Left lung (tissue), 14 donors: ENCODE measurements at regions of chr6 and their contacts with region 1.

Region 1: DNA sequence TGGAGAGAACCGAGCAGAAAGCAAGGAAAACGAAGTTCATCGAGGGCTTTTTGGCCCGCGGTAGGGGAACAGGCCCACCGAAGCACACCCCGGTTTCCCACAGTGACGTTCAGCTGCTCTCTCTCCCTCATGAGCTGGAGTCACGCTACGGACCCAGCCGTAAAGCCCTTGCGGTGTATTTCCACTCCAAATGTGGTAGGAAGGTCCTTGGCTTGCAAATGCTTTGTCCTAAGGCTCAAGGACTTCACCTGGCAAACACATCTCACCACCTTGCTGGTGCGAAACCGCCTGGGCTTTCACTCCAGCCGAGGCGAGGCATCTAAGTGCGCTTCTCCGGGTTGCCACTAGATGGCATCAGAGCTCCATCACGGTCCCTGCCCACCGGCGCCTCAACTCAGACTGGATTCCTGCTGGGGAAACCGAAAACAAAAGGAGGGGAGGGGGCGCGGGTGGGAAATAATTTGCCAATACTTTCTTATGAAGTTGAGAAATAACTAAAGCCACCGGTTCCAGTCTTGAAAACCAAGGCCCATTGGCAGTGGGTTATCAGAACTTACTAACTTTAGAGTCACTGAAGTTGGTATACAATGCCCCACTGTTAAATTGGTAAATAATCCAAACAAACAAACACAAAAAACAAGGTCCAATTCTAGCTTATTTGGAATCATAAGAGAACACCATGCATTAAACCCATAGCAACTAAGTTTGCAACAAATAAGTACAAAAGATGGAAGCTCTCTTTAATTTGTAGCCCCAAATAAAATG is 13.4 kb upstream of the FOXC1 start:
- DNase-seq: peak in 3 of 4 donors; percentile 71 to 89 (median 77)
- ATAC-seq: peak; percentile 98
- H3K4me3 ChIP-seq: no peak overlapping the region
- H3K27ac ChIP-seq: no peak overlapping the region
- H3K4me1 ChIP-seq: peaks cover 0 to 5% of the 10 kb centered on the region in 2 donors
- H3K27me3 ChIP-seq: peaks cover 23 to 91% of the 10 kb centered on the region in 2 donors
- CTCF ChIP-seq: peak; percentile 83 to 95

Region 2: GRCh38 chr6:1515280-1515679 is 81.0 kb before region 1 on chr6:
- intact Hi-C with region 1: no loop called
- DNase-seq: no peak
- ATAC-seq: no peak
- H3K4me3 ChIP-seq: no peak overlapping the region
- H3K27ac ChIP-seq: no peak overlapping the region
- H3K4me1 ChIP-seq: no peaks in the 10 kb centered on the region
- H3K27me3 ChIP-seq: no peaks in the 10 kb centered on the region
- CTCF ChIP-seq: no peak

Region 3: GRCh38 chr6:2353412-2354137 is 757.3 kb after region 1 on chr6:
- intact Hi-C with region 1: loop called (anchors 10 kb)
- DNase-seq: peak in 2 of 4 donors; percentile 71 to 81
- ATAC-seq: peak; percentile 91
- H3K4me3 ChIP-seq: no peak overlapping the region
- H3K27ac ChIP-seq: no peak overlapping the region
- H3K4me1 ChIP-seq: peaks cover 0 to 6% of the 10 kb centered on the region in 2 donors
- H3K27me3 ChIP-seq: no peaks in the 10 kb centered on the region
- CTCF ChIP-seq: peak; percentile 54 to 70

Region 4: GRCh38 chr6:2634139-2634964 is 1038.1 kb after region 1 on chr6:
- intact Hi-C with region 1: loop called in 1 of 2 experiments (anchors 10 kb)
- DNase-seq: peak; percentile 80 to 98 (median 86)
- ATAC-seq: peak; percentile 98
- H3K4me3 ChIP-seq: peak overlapping the region; percentile 42 to 54
- H3K27ac ChIP-seq: no peak overlapping the region
- H3K4me1 ChIP-seq: peaks cover 0 to 13% of the 10 kb centered on the region in 2 donors
- H3K27me3 ChIP-seq: no peaks in the 10 kb centered on the region
- CTCF ChIP-seq: peak; percentile 97 to 99

Region 5: DNA sequence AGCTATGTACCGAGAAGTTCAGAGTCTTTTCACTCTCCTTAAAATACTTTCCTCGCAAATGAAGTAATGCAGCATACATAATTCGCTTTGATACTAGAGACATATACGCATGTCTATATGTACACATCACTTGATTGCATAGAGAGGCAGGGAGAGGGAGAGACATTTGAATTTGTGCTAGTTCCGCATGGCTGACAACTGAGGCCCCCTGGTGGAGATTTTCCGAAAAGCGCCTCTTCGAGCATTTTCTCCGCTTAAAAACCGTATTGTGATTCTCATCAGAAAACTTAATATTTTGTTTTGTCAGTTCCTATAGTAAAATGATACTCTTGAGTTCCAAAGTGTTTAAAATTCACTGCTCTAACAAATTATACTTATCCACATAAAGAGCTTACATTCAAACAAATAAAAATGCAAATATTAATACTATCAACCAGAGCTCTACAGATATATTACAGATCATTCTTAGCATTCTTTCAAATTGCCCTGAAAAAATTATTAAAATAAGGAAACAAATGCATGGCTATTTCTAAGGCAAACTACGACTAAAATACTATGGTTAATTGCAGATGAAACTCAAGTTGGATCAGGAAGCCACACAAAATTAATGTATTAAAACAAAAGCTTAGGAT is 1153.8 kb after region 1 on chr6:
- intact Hi-C with region 1: loop called in 1 of 2 experiments (anchors 10 kb)
- DNase-seq: peak in 2 of 4 donors; percentile 69 to 73
- ATAC-seq: peak; percentile 84
- H3K4me3 ChIP-seq: no peak overlapping the region
- H3K27ac ChIP-seq: no peak overlapping the region
- H3K4me1 ChIP-seq: peaks cover 0 to 11% of the 10 kb centered on the region in 2 donors
- H3K27me3 ChIP-seq: no peaks in the 10 kb centered on the region
- CTCF ChIP-seq: peak; percentile 84 to 91